ENCODE measurements at regions of chr19 and their contacts with region 1.

Region 1: DNA sequence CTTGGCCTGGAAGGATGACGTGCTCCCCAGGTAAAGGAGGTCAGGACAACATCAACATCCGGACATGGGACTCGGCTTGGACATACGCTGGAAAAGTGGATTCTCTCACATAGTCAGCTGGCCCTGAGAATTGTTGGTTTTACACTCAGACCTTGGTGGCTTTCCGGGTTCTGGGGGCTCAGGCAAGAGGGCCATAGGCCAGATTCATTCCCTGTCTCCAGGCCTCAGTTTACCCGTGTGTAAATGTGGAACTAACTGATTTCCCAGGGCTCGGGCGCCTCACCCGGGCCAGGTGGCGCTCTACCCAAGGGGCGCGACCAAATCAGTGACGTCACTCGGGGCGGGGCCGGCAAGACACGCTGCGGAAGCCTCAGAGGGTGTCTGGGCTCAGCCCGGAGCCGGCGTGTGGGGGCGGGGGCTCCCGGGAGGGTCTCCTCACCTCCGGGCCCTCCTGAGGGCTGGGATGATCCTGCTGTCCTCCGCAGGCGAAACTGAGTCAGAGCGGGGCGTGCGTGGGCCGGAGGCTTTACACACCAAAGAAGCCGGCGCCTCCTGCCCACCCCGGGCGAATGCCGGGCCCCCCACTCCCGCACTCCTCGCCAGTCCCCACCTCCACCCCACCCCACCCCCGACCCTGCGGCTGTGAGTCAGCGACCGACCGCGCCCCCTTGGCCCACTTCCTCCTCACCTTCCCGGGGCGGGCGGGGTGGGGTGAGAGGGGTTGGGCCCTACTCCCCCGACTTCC is 861 bp upstream of the VASP start:
- DNase-seq: peak; percentile 98
- H3K4me3 ChIP-seq: peak overlapping the region; percentile 83 to 100 (median 100)
- H3K27ac ChIP-seq: peak overlapping the region; percentile 94 to 99 (median 98)
- H3K4me1 ChIP-seq: peaks cover 0 to 26% (median 24%) of the 10 kb centered on the region in 4 donors
- H3K27me3 ChIP-seq: peaks cover 0 to 4% (median 0%) of the 10 kb centered on the region in 3 donors
- CTCF ChIP-seq: peak in 1 of 4 experiments; percentile 26
- EP300 ChIP-seq: peak in 1 of 4 donors; percentile 1
- POLR2A ChIP-seq: peak; percentile 86 to 94

Region 2: GRCh38 chr19:44752816-44753618 is 753.4 kb before region 1 on chr19:
- intact Hi-C with region 1: loop called (anchors 10 kb)
- DNase-seq: peak; percentile 94
- H3K4me3 ChIP-seq: peak overlapping the region; percentile 22 to 72 (median 45)
- H3K27ac ChIP-seq: peak overlapping the region; percentile 87 to 94 (median 91)
- H3K4me1 ChIP-seq: peaks cover 0 to 94% (median 89%) of the 10 kb centered on the region in 4 donors
- H3K27me3 ChIP-seq: no peaks in the 10 kb centered on the region
- CTCF ChIP-seq: no peak
- EP300 ChIP-seq: peak in 3 of 4 donors; percentile 42 to 86 (median 86)
- POLR2A ChIP-seq: peak in 1 of 2 donors; percentile 30

Region 3: GRCh38 chr19:45528651-45529419 is 22.4 kb after region 1 on chr19:
- intact Hi-C with region 1: no loop called
- DNase-seq: no peak
- H3K4me3 ChIP-seq: peak overlapping the region in 3 of 4 donors; percentile 21 to 29 (median 24)
- H3K27ac ChIP-seq: no peak overlapping the region
- H3K4me1 ChIP-seq: peaks cover 0 to 23% (median 20%) of the 10 kb centered on the region in 4 donors
- H3K27me3 ChIP-seq: peaks cover 0 to 14% (median 0%) of the 10 kb centered on the region in 3 donors
- CTCF ChIP-seq: no peak
- EP300 ChIP-seq: no peak
- POLR2A ChIP-seq: no peak

Region 4: GRCh38 chr19:45584332-45585157 is 78.1 kb after region 1 on chr19 and contains the start of gene OPA3:
- intact Hi-C with region 1: loop called (anchors 2 kb)
- DNase-seq: peak; percentile 100
- H3K4me3 ChIP-seq: peak within 1 kb of the TSS; percentile 49 to 77 (median 62)
- H3K27ac ChIP-seq: peak within 1 kb of the TSS; percentile 91 to 99 (median 96)
- H3K4me1 ChIP-seq: peaks cover 0 to 12% (median 8%) of the 10 kb centered on the region in 4 donors
- H3K27me3 ChIP-seq: no peaks in the 10 kb centered on the region
- CTCF ChIP-seq: no peak
- EP300 ChIP-seq: peak in 3 of 4 donors; percentile 60 to 97 (median 87)
- POLR2A ChIP-seq: peak; percentile 15 to 55
- total RNA-seq, gene OPA3: 5.4 to 9.9 (median 8.1) TPM

Region 5: DNA sequence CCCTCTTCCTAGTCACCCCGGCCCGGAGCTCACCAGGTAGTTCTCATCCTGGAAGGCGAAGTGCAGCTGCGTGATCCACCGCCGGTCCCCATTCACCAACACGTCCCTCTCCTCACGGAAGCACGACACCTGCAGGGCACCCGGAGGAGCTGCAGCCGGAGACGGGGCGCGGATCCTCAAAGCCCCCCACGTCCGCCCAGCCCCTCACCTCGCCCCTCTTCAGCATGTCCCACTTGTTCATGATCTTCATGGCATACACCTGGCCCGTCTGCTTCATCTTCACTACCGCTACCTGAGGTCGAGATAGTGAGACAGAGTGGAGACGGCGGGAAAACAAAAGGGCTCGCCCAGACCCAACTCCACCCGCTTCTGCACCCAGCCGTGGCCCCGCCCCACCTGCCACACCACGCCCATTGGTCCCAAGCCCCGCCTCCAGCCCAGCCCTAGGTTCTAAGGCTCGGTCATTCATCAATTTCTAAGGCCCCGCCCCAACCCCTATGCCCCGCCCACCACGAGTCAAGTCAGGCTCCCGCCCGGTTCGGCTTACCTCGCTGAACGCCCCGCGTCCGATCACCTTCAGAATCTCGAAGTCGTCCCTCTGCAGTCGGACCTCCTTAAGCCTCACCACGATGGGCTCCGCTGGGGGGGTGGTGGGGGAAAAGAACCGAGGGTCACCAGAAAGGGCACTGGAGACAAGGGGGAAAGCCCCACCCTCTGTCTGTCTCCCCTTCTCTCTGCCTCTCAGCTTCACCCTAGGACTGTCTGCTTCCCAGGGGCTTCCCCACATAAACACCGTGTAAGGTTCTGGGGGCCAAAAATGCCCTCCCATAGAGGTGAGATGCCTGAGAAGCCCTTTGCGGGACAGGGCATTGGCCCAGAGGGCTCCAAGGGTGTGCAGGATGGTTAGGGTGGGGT is 273.1 kb after region 1 on chr19:
- intact Hi-C with region 1: loop called (anchors 10 kb)
- DNase-seq: peak; percentile 96
- H3K4me3 ChIP-seq: peak overlapping the region; percentile 19 to 94 (median 88)
- H3K27ac ChIP-seq: peak overlapping the region; percentile 96 to 98 (median 98)
- H3K4me1 ChIP-seq: peaks cover 0 to 59% (median 49%) of the 10 kb centered on the region in 4 donors
- H3K27me3 ChIP-seq: no peaks in the 10 kb centered on the region
- CTCF ChIP-seq: peak; percentile 70 to 82 (median 77)
- EP300 ChIP-seq: no peak
- POLR2A ChIP-seq: peak in 1 of 2 donors; percentile 7